PC-9 (cell line): ENCODE measurements at regions of chr14 and their contacts with region 1.

Region 1: GRCh38 chr14:55599200-55599879 is 19.3 kb downstream of the KTN1 start:
- DNase-seq: peak; percentile 45 to 66
- H3K4me3 ChIP-seq: no peak overlapping the region
- H3K27ac ChIP-seq: peak overlapping the region; percentile 33
- H3K4me1 ChIP-seq: peaks cover 29% of the 10 kb centered on the region
- H3K27me3 ChIP-seq: no peaks in the 10 kb centered on the region
- CTCF ChIP-seq: no peak

Region 2: DNA sequence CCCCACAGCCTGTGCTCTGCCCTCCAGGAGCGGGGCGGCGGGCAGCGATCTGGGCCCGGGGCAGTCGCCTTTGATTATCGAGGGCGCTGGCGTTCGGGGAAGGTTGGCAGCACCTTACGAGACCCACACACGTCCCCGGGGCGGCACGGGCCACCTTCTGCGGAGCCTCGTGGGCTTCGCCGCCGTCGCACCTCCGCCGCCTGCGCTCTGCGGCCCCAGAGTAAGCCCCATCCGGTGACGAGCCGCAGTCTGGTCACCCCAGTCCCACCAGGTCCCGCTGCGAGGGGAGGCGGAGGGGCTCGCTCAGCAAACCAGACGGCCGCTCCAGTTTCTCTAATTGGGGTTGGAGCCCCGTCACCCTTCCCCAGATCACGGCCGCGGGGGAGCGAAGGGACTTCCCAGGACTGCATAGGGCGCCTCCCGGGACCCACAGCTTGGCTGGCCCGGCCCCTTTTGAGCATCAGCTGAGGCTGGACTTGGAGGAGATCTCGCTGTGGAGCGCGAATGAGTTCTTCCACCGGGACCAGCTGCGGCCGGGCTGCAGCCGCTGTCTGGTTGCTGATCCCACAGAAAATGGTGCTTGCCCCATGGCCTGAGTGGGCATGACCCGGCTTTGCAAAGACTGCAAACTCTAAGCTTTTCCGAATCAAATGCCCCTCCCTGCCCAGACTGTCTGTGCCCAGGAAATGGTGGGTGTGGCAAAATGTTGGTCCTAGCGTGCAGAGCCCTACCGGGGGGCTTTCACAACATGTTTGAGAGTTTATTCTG is 469.7 kb before region 1 on chr14:
- CTCF ChIA-PET with region 1: no interaction called
- POLR2A ChIA-PET with region 1: interaction called, 13 read pairs
- intact Hi-C with region 1: no loop called
- DNase-seq: peak; percentile 53 to 57
- H3K4me3 ChIP-seq: peak overlapping the region; percentile 77
- H3K27ac ChIP-seq: peak overlapping the region; percentile 72
- H3K4me1 ChIP-seq: peaks cover 58% of the 10 kb centered on the region
- H3K27me3 ChIP-seq: no peaks in the 10 kb centered on the region
- CTCF ChIP-seq: no peak

Region 3: GRCh38 chr14:55416866-55417265 is 182.5 kb before region 1 on chr14:
- CTCF ChIA-PET with region 1: interaction called, 10 read pairs
- POLR2A ChIA-PET with region 1: no interaction called
- intact Hi-C with region 1: no loop called
- DNase-seq: peak in 1 of 2 experiments; percentile 9
- H3K4me3 ChIP-seq: no peak overlapping the region
- H3K27ac ChIP-seq: no peak overlapping the region
- H3K4me1 ChIP-seq: peaks cover 19% of the 10 kb centered on the region
- H3K27me3 ChIP-seq: no peaks in the 10 kb centered on the region
- CTCF ChIP-seq: peak; percentile 69

Region 4: DNA sequence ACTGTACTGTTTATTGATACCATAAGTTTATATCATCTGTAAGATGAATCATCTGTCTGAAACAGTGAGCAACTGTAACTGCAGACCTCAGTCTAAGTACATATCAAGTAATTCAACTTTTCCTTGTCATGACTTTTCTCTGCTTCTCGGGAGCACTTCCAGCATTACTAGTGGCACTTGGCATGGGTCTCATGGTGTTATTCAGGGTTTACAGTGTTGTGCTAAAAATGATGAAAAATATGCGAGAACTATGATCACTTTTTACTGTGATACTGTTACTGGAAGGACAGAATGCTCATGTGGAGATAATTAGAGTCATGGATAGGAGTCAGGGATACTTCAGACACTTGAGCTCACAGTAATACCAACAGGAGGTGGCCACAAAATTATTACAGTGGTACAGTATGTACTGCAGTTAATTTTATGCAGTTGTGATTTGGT is 11.1 kb before region 1 on chr14:
- CTCF ChIA-PET with region 1: no interaction called
- POLR2A ChIA-PET with region 1: interaction called, 14 read pairs
- intact Hi-C with region 1: no loop called
- DNase-seq: no peak
- H3K4me3 ChIP-seq: no peak overlapping the region
- H3K27ac ChIP-seq: no peak overlapping the region
- H3K4me1 ChIP-seq: peaks cover 40% of the 10 kb centered on the region
- H3K27me3 ChIP-seq: no peaks in the 10 kb centered on the region
- CTCF ChIP-seq: no peak

Region 5: DNA sequence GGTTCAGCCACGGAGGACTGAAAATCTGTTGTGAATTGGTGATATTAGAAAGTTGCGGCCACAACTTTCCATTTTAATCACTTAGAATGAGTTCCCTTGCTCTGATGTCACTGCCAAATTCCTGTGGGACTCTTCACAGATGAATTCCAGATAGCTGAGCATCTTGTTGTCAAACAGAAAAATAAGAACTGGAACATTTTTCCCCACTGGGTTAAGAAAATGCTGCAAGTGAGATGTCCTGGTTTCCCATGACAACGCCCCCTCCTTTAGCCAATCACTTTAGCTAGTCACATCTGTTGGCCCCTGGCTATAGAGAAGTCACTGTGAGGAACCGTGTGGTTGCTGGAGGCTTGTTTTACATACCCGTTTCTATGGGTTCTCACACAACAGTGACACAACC is 116.5 kb after region 1 on chr14:
- CTCF ChIA-PET with region 1: no interaction called
- POLR2A ChIA-PET with region 1: interaction called, 12 read pairs
- intact Hi-C with region 1: no loop called
- DNase-seq: no peak
- H3K4me3 ChIP-seq: no peak overlapping the region
- H3K27ac ChIP-seq: no peak overlapping the region
- H3K4me1 ChIP-seq: peaks cover under 1% of the 10 kb centered on the region; the same call in 1 of the 2 replicates
- H3K27me3 ChIP-seq: no peaks in the 10 kb centered on the region
- CTCF ChIP-seq: no peak